HEK293 (cell line): ENCODE measurements at regions of chr10 and their contacts with region 1.

Region 1: GRCh38 chr10:71270301-71271220 is 48.5 kb upstream of the SLC29A3 start:
- H3K4me3 ChIP-seq: no peak overlapping the region
- H3K27ac ChIP-seq: no peak overlapping the region
- H3K4me1 ChIP-seq: no peaks in the 10 kb centered on the region; the same call in 1 of the 2 replicates
- CTCF ChIP-seq: peak; percentile 29; the same call in 1 of the 2 replicates

Region 2: DNA sequence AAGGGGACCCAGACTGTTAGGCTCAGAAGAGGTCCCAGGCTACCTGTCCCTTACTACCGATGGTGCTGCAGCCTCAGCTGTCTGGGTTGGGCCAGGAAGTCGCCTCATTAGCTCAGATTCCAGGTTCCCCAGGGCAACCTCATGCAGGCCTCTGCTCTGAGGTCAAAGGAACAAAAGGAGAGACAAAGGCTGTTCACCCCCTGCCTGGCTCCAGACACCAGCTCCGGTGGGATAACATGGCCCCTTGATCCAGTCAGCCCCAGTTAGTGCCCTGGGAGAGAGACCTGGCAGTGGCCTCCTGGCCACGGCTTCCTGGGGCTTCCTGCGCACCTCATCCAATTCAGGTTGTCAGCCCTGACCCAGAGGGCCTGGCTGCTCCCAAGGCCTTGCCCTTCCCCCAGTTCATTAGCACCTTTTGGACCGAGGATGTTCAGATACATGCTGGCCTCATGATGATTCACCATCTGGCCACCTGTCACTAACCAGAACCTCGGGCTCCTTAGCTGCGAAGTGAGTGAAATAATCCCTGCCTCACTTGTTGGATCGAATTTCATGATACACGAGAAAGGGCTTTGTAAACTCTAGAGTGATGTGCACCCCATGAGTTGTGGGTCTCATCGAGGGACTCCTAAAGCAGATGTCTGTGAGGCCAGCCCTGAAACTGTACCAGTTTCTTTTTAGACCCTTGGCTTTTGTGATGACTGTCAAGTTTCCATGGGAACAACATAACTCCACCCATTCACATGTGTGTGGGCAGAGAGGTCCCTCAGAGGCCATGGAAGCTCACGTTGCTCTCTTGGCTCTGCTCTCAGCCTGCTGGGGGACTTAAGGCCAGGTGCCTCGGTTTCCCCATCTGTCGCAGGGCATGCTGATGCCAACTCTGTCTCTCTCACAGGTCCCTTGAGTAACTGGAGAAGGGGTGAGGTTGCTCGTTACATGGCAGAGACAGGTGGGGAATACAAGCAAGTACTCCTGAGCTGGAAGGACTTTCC is 302.7 kb before region 1 on chr10:
- CTCF ChIA-PET with region 1: no interaction called
- POLR2A ChIA-PET with region 1: no interaction called
- H3K4me3 ChIP-seq: no peak overlapping the region
- H3K27ac ChIP-seq: no peak overlapping the region
- H3K4me1 ChIP-seq: no peaks in the 10 kb centered on the region
- CTCF ChIP-seq: no peak

Region 3: DNA sequence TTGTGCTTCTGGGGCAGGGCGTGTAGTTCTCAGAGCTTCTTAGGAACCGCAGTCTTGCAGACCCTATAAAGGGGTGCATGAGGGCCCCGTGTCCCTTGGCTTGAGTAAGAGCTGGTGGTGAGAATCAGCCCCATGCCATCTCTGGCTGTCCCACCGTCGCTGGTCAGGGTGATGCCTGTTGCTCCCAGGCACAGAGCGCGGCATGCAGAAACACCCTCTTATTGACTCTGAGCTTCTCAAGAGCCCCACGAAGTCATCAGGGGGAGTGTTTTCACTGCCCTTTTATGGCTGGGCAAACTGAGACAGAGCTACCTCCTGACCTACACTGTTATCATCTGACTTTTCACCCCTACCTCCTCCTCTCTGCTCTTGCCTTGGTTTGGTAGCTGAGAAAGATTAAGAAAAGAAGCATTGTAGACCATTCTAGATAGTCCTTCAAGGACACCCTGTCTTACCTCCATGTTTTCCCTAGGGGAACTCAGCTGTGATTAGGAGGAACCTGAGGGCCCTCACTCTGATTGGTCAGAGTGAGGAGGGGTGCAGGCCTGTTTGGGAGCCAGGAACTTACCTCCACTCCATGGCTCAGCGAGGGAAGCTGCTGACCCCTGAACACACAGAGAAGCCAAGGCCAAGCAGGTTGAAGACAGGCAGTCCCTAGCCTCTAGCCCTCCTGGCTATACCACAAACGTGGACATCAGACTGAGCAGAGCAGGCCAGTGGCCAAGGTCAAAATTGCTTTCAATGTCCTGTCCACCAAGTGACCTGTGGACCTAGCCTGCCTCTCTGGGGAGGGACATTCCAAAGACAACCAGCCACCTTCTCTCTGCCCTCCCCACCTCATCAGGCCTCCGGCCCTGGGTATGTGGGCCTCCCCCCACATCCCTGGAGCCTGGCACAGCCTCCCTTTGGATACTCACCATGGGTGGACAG is 40.6 kb before region 1 on chr10:
- CTCF ChIA-PET with region 1: interaction called, 12 read pairs
- POLR2A ChIA-PET with region 1: no interaction called
- H3K4me3 ChIP-seq: no peak overlapping the region
- H3K27ac ChIP-seq: no peak overlapping the region
- H3K4me1 ChIP-seq: peaks cover 32% of the 10 kb centered on the region
- CTCF ChIP-seq: no peak

Region 4: GRCh38 chr10:71255808-71256660 is 14.5 kb before region 1 on chr10:
- CTCF ChIA-PET with region 1: interaction called, 20 read pairs
- POLR2A ChIA-PET with region 1: no interaction called
- H3K4me3 ChIP-seq: no peak overlapping the region
- H3K27ac ChIP-seq: no peak overlapping the region
- H3K4me1 ChIP-seq: peaks cover 6% of the 10 kb centered on the region
- CTCF ChIP-seq: no peak

Region 5: DNA sequence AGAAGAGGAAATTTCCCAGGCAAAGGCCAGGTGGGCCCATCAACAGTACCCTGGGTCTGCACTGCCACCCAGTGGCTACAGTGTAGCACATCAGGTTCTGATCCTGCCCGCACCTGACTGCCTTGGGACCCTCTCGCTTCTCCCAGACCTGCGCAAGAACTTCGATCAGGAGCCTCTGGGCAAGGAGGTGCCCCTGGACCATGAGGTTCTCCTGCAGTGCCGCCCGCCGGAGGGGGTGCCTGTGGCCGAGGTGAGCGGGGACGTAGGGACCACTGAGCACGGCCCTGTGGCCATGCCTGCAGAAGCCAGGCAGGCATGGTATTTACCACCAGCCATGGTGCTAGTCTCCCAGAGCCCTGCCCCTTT is 14.6 kb after region 1 on chr10:
- CTCF ChIA-PET with region 1: interaction called, 15 read pairs
- POLR2A ChIA-PET with region 1: no interaction called
- H3K4me3 ChIP-seq: no peak overlapping the region
- H3K27ac ChIP-seq: no peak overlapping the region
- H3K4me1 ChIP-seq: no peaks in the 10 kb centered on the region
- CTCF ChIP-seq: peak; percentile 68; the same call in 1 of the 2 replicates

Region 6: GRCh38 chr10:71659111-71659634 is 388.6 kb after region 1 on chr10:
- CTCF ChIA-PET with region 1: no interaction called
- POLR2A ChIA-PET with region 1: no interaction called
- H3K4me3 ChIP-seq: no peak overlapping the region
- H3K27ac ChIP-seq: no peak overlapping the region
- H3K4me1 ChIP-seq: no peaks in the 10 kb centered on the region
- CTCF ChIP-seq: no peak